ENCODE measurements at regions of chr6 and their contacts with region 1.

Region 1: GRCh38 chr6:33276864-33277662 is at the start of gene B3GALT4:
- DNase-seq: peak; percentile 90 to 95 (median 92)
- ATAC-seq: peak; percentile 83
- H3K4me3 ChIP-seq: peak within 1 kb of the TSS; percentile 93
- H3K27ac ChIP-seq: peak within 1 kb of the TSS; percentile 98
- H3K4me1 ChIP-seq: peaks cover 39 to 40% of the 10 kb centered on the region in 2 experiments
- H3K27me3 ChIP-seq: no peaks in the 10 kb centered on the region
- CTCF ChIP-seq: peak; percentile 77 to 92 (median 85)
- EP300 ChIP-seq: 0 out of 2 replicates have a peak, but pooled peaks have one; percentile 42
- POLR2A ChIP-seq: peak; percentile 87
- RAD21 ChIP-seq: peak; percentile 50 to 52; a peak in 3 of 4 replicates
- polyA plus RNA-seq, gene B3GALT4: 0.11 TPM in 1 of 2 experiments, not detected in the other

Region 2: GRCh38 chr6:33264015-33264414 is 13.0 kb before region 1 on chr6:
- CTCF ChIA-PET with region 1: no interaction called
- POLR2A ChIA-PET with region 1: interaction called, 30 read pairs
- in situ Hi-C with region 1: no loop called
- intact Hi-C with region 1: no loop called
- DNase-seq: no peak
- ATAC-seq: peak; percentile 52
- H3K4me3 ChIP-seq: no peak overlapping the region
- H3K27ac ChIP-seq: no peak overlapping the region
- H3K4me1 ChIP-seq: no peaks in the 10 kb centered on the region; a peak in 1 of 5 replicates
- H3K27me3 ChIP-seq: no peaks in the 10 kb centered on the region
- CTCF ChIP-seq: no peak
- EP300 ChIP-seq: no peak
- POLR2A ChIP-seq: no peak; the same call in 1 of the 2 replicates
- RAD21 ChIP-seq: no peak

Region 3: GRCh38 chr6:33288921-33289748 is 12.1 kb after region 1 on chr6 and contains the starts of genes PFDN6 and WDR46:
- CTCF ChIA-PET with region 1: no interaction called
- POLR2A ChIA-PET with region 1: interaction called, 90 read pairs
- in situ Hi-C with region 1: no loop called
- intact Hi-C with region 1: no loop called
- DNase-seq: peak; percentile 89 to 97 (median 92)
- ATAC-seq: peak; percentile 97
- H3K4me3 ChIP-seq: peak within 1 kb of the TSS; percentile 76
- H3K27ac ChIP-seq: peak within 1 kb of the TSS; percentile 83
- H3K4me1 ChIP-seq: peaks cover 13 to 24% of the 10 kb centered on the region in 2 experiments; a peak in 4 of 5 replicates
- H3K27me3 ChIP-seq: no peaks in the 10 kb centered on the region
- CTCF ChIP-seq: no peak
- EP300 ChIP-seq: no peak; the same call in 1 of the 2 replicates
- POLR2A ChIP-seq: peak; percentile 89
- RAD21 ChIP-seq: no peak
- polyA plus RNA-seq, gene PFDN6: 6.8 to 8.7 TPM
- polyA plus RNA-seq, gene WDR46: 8.9 to 27.6 TPM

Region 4: DNA sequence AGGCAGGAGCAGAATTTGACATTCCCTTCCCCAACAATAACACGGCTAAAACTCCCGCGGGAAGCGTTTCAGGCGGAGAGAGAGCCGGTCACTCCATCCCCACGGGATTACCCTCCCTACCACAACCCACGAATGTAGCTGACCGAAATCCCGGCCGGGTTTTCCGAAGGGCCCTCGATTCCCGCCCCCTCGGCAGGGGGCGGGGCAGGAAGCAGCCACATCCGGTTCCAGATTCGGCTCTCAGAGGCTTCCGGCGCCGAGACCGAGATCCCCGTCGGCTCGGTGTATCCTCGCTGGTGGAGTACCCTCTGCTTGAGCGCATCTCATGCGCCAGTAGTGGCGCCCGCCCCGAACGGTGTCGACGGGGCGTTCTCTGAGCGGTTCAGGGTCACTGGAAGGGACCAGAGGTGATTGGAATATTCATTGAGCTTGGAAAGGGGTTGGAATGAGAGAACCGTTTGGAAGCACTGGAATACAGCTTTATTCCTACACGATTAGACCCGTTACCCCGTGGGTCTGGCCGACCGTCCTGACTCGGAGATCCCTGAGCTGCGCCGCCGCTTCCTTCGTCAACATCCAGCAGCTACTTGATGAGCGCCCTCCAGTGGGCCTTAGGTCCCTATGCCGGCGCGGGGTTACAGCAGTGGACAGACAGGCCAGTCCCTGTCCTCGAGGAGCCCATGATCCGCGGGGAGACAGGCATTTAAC is 22.3 kb after region 1 on chr6:
- CTCF ChIA-PET with region 1: interaction called, 20 read pairs
- POLR2A ChIA-PET with region 1: interaction called, 16 read pairs
- in situ Hi-C with region 1: no loop called
- intact Hi-C with region 1: loop called (anchors 1 kb)
- DNase-seq: peak; percentile 90 to 98 (median 92)
- ATAC-seq: peak; percentile 84
- H3K4me3 ChIP-seq: peak overlapping the region; percentile 64
- H3K27ac ChIP-seq: peak overlapping the region; percentile 94
- H3K4me1 ChIP-seq: peaks cover 11 to 44% of the 10 kb centered on the region in 2 experiments
- H3K27me3 ChIP-seq: no peaks in the 10 kb centered on the region
- CTCF ChIP-seq: peak; percentile 89 to 97 (median 97)
- EP300 ChIP-seq: peak; percentile 46
- POLR2A ChIP-seq: peak; percentile 99
- RAD21 ChIP-seq: peak; percentile 68 to 69

Region 5: DNA sequence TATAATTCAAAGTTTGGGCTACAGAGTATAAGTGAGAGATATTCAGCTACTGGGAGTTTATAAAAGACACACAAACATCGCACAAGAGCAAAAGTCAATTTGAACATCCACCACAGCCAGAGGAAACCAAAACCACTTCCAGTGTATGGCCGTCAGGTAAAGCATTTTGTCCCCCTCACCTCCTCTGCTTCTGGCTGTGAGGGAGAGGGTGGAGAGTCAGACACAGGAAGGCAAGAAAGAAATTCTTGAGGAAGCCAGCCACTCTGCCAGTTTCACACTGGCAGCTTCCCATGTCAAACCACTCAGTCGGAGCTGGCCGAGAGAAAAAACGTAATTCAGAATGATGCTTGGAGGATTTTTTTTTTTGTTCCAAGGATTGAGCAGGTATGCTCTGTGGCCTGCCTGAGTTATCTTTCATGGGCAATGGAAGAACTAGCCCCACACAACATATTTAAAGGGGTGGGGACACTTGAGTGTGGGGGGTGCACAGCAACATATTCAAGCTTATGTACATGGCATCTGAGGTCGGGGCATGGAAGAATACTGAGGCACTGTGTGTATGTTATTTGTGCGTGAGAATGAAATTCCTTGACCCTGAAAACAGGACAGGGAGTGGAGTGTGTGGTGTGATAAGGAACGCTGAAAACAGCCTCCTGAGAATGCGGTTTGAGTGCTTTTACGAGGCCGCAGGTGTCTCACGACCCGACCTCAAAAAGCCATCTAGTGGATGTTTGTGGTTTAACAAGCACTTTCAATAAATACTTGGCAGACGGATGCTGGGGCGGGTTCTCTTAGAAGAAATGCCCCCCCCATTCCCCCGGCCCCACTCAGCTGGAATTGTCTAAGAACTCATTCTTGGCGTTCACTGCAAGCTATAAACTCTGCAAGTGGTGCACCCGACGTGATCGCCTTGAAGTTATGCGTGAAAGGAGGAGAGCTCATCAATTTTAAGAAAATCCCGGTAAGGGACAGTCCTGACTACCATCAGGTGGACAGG is 67.9 kb after region 1 on chr6:
- CTCF ChIA-PET with region 1: interaction called, 14 read pairs
- POLR2A ChIA-PET with region 1: interaction called, 3 read pairs
- in situ Hi-C with region 1: no loop called
- intact Hi-C with region 1: loop called (anchors 2 kb)
- DNase-seq: peak; percentile 84 to 93 (median 84)
- ATAC-seq: peak; percentile 85
- H3K4me3 ChIP-seq: no peak overlapping the region
- H3K27ac ChIP-seq: peak overlapping the region; percentile 1; the same call in 1 of the 3 replicates
- H3K4me1 ChIP-seq: peaks cover 5 to 12% of the 10 kb centered on the region in 2 experiments; a peak in 3 of 5 replicates
- H3K27me3 ChIP-seq: no peaks in the 10 kb centered on the region
- CTCF ChIP-seq: peak; percentile 76 to 81 (median 80)
- EP300 ChIP-seq: peak; percentile 61
- POLR2A ChIP-seq: no peak
- RAD21 ChIP-seq: peak; percentile 72 to 83

Region 6: DNA sequence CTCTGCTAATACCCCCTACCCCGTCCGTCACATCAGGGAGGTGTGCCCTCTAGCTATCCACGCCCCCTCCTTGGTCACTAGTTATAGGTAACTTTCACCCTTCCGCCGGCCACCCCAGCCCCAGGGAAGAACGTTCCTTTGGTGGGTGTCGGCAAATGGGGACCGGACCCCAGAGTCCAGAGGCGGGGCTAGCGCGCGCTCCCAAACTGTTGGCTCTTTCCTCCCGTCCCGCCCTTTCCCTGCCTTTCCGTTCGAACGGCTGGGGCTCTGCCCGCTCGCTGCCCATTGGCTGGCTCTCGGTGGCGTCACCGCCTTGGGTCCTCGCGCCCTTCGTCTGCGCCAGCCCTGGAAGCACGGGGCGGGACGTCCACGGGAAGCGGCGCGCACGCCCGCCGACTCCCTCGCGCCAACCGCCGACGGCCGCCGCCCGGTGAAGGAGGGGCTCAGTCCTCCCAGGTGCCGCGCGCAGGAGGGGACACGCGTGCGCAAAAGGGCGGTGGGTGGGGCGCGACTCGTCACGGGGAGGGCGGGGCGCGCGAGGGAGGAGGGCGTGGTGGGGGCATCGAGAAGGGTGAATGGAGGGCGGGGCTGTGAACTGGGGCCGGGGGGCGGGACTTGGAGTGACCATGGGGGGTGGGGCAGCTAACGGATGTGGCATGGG is 133.1 kb after region 1 on chr6:
- CTCF ChIA-PET with region 1: interaction called, 64 read pairs
- POLR2A ChIA-PET with region 1: interaction called, 9 read pairs
- in situ Hi-C with region 1: loop called (anchors 10 kb)
- intact Hi-C with region 1: loop called (anchors 1 kb)
- DNase-seq: peak; percentile 97 to 99 (median 98)
- ATAC-seq: peak; percentile 96
- H3K4me3 ChIP-seq: peak overlapping the region; percentile 95
- H3K27ac ChIP-seq: peak overlapping the region; percentile 93
- H3K4me1 ChIP-seq: peaks cover 11 to 27% of the 10 kb centered on the region in 2 experiments; a peak in 4 of 5 replicates
- H3K27me3 ChIP-seq: no peaks in the 10 kb centered on the region
- CTCF ChIP-seq: 0 out of 6 replicates have a peak, but pooled peaks of 1 of the 3 experiments have one; percentile 1
- EP300 ChIP-seq: peak; percentile 43
- POLR2A ChIP-seq: peak; percentile 90
- RAD21 ChIP-seq: 0 out of 4 replicates have a peak, but pooled peaks of 1 of the 2 experiments have one; percentile 8

Region 7: DNA sequence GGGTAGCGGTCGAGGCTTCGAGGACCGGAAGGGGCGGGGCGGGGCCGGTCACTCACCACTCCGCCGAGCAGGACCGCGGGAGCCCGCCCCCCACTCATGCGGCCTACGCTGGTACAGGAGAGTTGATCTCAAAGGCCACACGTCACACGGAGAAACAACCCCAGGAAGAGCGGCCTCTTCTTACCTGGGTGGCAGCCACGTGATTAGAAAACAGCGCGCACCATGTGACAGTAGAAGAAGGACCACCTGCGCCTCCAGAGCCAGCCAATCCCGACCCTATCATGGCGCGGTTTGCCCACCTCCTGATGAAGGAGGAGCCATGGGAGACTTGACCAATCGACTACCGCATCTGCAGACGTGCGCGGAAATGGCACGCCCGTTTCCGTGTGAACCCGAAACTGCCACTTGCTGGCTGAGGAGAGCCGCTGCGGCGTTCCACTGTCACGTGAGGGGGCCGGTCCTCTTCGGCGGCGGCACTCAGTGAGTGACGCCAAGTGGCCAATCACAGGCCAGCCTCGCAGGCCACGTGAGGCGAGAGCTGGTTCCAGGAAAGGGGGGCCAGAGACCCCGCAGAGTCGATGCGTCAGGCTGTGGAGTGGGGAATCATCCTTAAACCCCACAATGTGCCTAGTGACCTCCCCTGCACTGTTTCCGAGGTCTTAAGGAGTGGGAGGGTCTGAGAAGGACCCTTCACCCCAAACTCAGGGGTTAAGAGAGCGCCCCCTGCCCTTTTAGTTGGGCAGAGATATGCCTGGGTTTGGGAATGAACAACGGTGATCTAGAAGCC is 141.0 kb after region 1 on chr6 and contains the start of gene CUTA:
- CTCF ChIA-PET with region 1: interaction called, 5 read pairs
- POLR2A ChIA-PET with region 1: interaction called, 4 read pairs
- in situ Hi-C with region 1: no loop called
- intact Hi-C with region 1: loop called (anchors 2 kb)
- DNase-seq: peak; percentile 95 to 100 (median 97)
- ATAC-seq: peak; percentile 93
- H3K4me3 ChIP-seq: peak within 1 kb of the TSS; percentile 84
- H3K27ac ChIP-seq: peak within 1 kb of the TSS; percentile 95
- H3K4me1 ChIP-seq: peaks cover 40 to 43% of the 10 kb centered on the region in 2 experiments
- H3K27me3 ChIP-seq: no peaks in the 10 kb centered on the region
- CTCF ChIP-seq: peak; percentile 35 to 80 (median 52); a peak in 4 of 6 replicates
- EP300 ChIP-seq: peak; percentile 33; the same call in 1 of the 2 replicates
- POLR2A ChIP-seq: peak; percentile 87
- RAD21 ChIP-seq: 0 out of 4 replicates have a peak, but pooled peaks of 1 of the 2 experiments have one; percentile 12
- polyA plus RNA-seq, gene CUTA: 653 to 682 TPM

Region 8: DNA sequence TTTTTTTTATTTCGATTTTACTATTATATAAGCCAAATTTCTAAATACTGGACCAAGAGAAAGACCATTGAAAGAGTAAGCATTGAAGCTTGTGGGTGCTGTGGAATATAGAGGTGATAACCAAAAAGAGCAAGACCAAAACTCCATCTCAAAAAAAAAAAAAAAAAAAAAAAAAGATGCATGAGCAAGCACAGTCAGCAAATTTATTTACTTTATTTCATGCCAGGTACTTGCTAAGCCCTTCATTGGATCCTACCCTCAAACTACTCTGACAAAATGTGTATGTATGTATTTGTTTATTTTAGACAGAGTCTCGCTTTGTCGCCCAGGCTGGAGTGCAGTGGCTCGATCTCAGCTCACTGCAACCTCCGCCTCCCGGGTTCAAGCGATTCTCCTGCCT is 275.2 kb after region 1 on chr6:
- CTCF ChIA-PET with region 1: no interaction called
- POLR2A ChIA-PET with region 1: no interaction called
- in situ Hi-C with region 1: no loop called
- intact Hi-C with region 1: no loop called
- DNase-seq: no peak
- ATAC-seq: no peak
- H3K4me3 ChIP-seq: no peak overlapping the region
- H3K27ac ChIP-seq: no peak overlapping the region
- H3K4me1 ChIP-seq: peaks cover 0 to 3% of the 10 kb centered on the region in 2 experiments; a peak in 1 of 5 replicates
- H3K27me3 ChIP-seq: peaks cover 0 to 2% of the 10 kb centered on the region in 2 experiments; a peak in 1 of 5 replicates
- CTCF ChIP-seq: no peak
- EP300 ChIP-seq: no peak
- POLR2A ChIP-seq: no peak
- RAD21 ChIP-seq: no peak